Activated B cell treated with CpG ODN at 0.5 μM for 24 hours (primary cell): ENCODE measurements at regions of chr22 and their contacts with region 1.

Region 1: DNA sequence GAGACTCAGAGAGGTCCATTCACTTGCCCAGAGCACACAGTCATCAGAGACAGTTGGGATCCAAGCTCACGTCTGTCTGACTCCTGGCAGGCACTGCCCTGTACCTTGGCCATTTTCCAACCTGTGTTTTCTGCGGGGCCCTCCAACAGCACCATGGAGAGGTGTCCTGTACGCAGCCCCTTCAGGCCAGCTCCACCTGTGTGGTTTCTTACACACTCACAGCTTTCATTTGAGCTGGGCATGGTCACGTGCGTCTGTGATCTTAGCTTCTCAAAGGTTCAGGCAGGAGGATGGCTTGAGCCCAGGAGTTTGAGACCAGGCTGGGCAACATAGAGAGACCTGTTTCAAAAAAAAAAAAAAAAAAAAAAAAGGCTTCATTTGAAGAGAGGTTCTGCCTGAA is 24.4 kb downstream of the TOM1 start:
- DNase-seq: no peak
- ATAC-seq: no peak
- H3K4me3 Mint-ChIP-seq: no peak overlapping the region
- H3K27ac Mint-ChIP-seq: no peak overlapping the region
- H3K4me1 Mint-ChIP-seq: peaks cover 15% of the 10 kb centered on the region
- H3K27me3 Mint-ChIP-seq: no peaks in the 10 kb centered on the region
- CTCF ChIP-seq: no peak

Region 2: DNA sequence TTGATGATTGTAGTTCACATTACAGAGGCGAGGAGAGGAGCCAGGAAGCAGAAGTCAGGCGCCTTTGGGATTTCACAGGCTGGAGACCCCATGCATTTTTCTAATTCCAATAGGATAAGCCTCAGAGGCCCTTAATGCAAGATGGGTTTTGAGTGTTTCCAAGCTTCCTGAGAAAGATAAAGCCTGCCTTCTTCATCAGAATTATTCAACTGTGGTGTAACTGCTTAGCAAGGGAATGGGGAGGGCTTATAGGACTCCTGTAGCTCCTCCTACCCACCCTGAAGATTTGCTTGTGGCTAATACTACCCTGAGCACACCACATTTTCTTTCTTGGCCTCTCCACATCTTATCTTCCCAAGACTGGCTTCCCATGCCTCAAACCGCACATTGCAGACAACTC is 409.2 kb before region 1 on chr22:
- CTCF ChIA-PET with region 1: no interaction called
- POLR2A ChIA-PET with region 1: no interaction called
- intact Hi-C with region 1: no loop called
- DNase-seq: no peak
- ATAC-seq: no peak
- H3K4me3 Mint-ChIP-seq: no peak overlapping the region
- H3K27ac Mint-ChIP-seq: no peak overlapping the region
- H3K4me1 Mint-ChIP-seq: no peaks in the 10 kb centered on the region
- H3K27me3 Mint-ChIP-seq: peaks cover 2% of the 10 kb centered on the region
- CTCF ChIP-seq: no peak

Region 3: GRCh38 chr22:35313311-35314121 is 10.6 kb before region 1 on chr22:
- CTCF ChIA-PET with region 1: no interaction called
- POLR2A ChIA-PET with region 1: interaction called, 10 read pairs
- intact Hi-C with region 1: no loop called
- DNase-seq: peak; percentile 6
- ATAC-seq: no peak
- H3K4me3 Mint-ChIP-seq: no peak overlapping the region
- H3K27ac Mint-ChIP-seq: no peak overlapping the region
- H3K4me1 Mint-ChIP-seq: peaks cover 38% of the 10 kb centered on the region
- H3K27me3 Mint-ChIP-seq: no peaks in the 10 kb centered on the region
- CTCF ChIP-seq: no peak